Body of pancreas (tissue), 4 donors: ENCODE measurements at regions of chr22 and their contacts with region 1.

Region 1: GRCh38 chr22:23632178-23632577 is at the start of gene DRICH1:
- DNase-seq: no peak
- ATAC-seq: no peak
- H3K4me3 ChIP-seq: no peak within 1 kb of the TSS
- H3K27ac ChIP-seq: no peak within 1 kb of the TSS
- H3K4me1 ChIP-seq: no peaks in the 10 kb centered on the region
- H3K27me3 ChIP-seq: no peaks in the 10 kb centered on the region
- CTCF ChIP-seq: no peak
- POLR2A ChIP-seq: no peak
- total RNA-seq, gene DRICH1: not detected

Region 2: GRCh38 chr22:23696326-23696851 is 64.2 kb after region 1 on chr22:
- intact Hi-C with region 1: loop called (anchors 10 kb)
- DNase-seq: peak in 2 of 4 donors; percentile 39 to 54
- ATAC-seq: peak; percentile 16
- H3K4me3 ChIP-seq: no peak overlapping the region
- H3K27ac ChIP-seq: no peak overlapping the region
- H3K4me1 ChIP-seq: peaks cover 12% of the 10 kb centered on the region
- H3K27me3 ChIP-seq: no peaks in the 10 kb centered on the region
- CTCF ChIP-seq: no peak
- POLR2A ChIP-seq: no peak